IMR-90 (cell line): ENCODE measurements at regions of chr3 and their contacts with region 1.

Region 1: DNA sequence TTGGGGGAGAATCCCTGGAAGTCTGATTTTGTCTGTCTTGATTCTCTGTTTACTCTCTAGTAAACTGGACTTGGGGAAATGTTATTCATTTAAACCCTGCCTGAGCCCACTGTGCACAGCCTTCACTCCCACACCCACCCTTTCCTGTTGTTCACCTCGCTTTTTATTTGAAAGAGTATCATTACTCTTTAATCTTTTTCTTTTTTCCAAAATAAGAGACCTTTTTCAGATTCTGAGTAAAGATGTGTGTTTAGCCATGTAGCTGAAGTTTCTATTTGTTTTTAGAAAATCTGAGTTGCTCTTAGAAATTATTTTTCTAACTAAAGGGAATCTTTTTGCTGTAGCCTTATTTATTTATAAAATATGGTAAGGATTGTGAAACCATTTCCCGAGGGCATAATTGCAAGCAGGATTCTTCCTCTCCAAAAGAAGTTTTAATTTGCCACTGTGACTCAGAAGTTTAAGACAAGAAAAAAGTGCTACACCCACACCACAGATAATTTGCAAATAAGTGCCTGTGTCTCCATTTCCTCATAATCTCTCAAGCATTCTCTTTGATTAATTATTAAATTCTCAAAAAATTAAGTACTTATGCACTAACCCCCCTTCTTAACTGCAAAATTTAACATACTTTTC is 43.4 kb downstream of the RASA2 start:
- DNase-seq: peak; percentile 81
- ATAC-seq: peak; percentile 85
- H3K4me3 ChIP-seq: peak overlapping the region; percentile 29; the same call in 1 of the 2 replicates
- H3K27ac ChIP-seq: peak overlapping the region; percentile 98
- H3K4me1 ChIP-seq: peaks cover 1% of the 10 kb centered on the region; the same call in 1 of the 2 replicates
- H3K27me3 ChIP-seq: no peaks in the 10 kb centered on the region
- CTCF ChIP-seq: no peak
- POLR2A ChIP-seq: no peak
- RAD21 ChIP-seq: no peak

Region 2: GRCh38 chr3:140777631-140778233 is 752.5 kb before region 1 on chr3:
- CTCF ChIA-PET with region 1: no interaction called
- POLR2A ChIA-PET with region 1: no interaction called
- dilution Hi-C with region 1: no loop called
- in situ Hi-C with region 1: no loop called
- intact Hi-C with region 1: no loop called
- DNase-seq: no peak
- ATAC-seq: no peak
- H3K4me3 ChIP-seq: no peak overlapping the region
- H3K27ac ChIP-seq: no peak overlapping the region
- H3K4me1 ChIP-seq: no peaks in the 10 kb centered on the region
- H3K27me3 ChIP-seq: no peaks in the 10 kb centered on the region
- CTCF ChIP-seq: no peak
- POLR2A ChIP-seq: no peak
- RAD21 ChIP-seq: no peak

Region 3: DNA sequence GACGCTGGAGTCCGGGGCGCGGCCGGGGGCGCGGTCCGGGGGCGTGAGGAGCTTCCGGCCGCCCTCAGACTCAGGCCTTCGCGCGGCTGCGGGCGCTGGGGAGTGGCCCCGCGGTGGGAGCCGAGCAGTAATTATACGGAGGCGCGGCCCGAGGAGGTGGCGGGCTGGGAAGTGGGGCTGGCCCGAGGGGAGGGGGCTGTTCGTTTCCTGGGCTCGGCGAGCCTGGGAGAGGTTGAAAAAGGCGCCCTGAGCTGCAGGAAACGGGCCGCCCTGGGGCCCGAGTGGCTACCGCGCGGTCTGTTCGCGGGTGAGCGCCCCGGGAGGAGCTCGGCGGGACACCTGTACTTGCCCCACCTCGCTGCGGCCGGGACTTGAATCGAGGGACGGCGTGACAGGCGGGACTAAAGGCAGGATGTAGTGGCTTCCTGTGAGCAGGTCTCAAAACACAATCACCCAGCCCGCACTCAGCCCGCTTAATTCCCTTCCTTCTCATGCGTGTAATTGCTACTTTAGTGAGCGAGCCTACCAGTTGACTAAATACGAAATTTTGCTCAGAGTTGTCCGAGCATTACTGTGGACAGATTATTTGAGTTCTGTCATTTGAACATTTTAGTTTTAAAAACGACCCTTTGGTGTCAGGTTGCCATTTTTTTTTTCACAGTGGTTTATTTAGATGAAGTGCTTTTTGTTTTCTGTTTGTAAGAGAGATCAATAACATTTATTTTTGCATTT is 42.6 kb before region 1 on chr3:
- CTCF ChIA-PET with region 1: no interaction called
- POLR2A ChIA-PET with region 1: no interaction called
- dilution Hi-C with region 1: no loop called
- in situ Hi-C with region 1: no loop called
- intact Hi-C with region 1: loop called (anchors 5 kb)
- DNase-seq: peak; percentile 44
- ATAC-seq: peak; percentile 50; the same call in 1 of the 2 replicates
- H3K4me3 ChIP-seq: peak overlapping the region; percentile 81
- H3K27ac ChIP-seq: peak overlapping the region; percentile 94
- H3K4me1 ChIP-seq: peaks cover 3% of the 10 kb centered on the region
- H3K27me3 ChIP-seq: no peaks in the 10 kb centered on the region
- CTCF ChIP-seq: no peak
- POLR2A ChIP-seq: no peak
- RAD21 ChIP-seq: no peak